WTC11 (cell line): ENCODE measurements at regions of chrX and their contacts with region 1.

Region 1: DNA sequence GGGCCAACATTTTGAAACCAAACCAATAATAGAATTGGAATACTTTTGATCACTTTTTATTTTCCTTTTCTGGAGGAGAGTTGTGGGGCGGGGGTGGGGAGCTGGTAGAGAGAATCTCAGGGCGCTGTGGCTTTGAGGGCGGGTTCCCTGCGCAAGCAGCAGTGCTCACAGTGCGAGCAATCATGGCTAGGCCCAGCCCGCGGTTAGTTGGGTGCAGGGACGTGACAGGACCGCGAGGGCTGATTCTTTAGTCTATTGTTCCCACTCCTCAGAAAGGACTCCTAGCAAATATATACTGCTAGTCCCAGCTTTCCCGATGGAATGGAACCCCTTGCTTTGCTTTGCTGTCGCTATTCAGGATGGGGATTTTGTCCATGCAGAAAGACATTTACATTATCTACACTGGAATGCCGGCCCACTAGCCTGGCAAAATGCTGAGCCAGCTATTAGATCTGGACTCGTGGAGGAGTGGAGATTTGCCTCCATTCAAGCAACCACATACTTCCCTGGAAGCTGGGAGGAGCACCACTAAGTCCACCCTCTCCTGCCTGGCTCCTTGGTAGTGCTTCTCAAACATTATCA is 23.9 kb upstream of the APLN start:
- DNase-seq: no peak
- ATAC-seq: no peak
- H3K4me3 Mint-ChIP-seq: peak overlapping the region; percentile 43
- H3K27ac Mint-ChIP-seq: no peak overlapping the region
- H3K4me1 Mint-ChIP-seq: peaks cover 14% of the 10 kb centered on the region
- H3K27me3 Mint-ChIP-seq: peaks cover 22% of the 10 kb centered on the region
- CTCF ChIP-seq: no peak

Region 2: DNA sequence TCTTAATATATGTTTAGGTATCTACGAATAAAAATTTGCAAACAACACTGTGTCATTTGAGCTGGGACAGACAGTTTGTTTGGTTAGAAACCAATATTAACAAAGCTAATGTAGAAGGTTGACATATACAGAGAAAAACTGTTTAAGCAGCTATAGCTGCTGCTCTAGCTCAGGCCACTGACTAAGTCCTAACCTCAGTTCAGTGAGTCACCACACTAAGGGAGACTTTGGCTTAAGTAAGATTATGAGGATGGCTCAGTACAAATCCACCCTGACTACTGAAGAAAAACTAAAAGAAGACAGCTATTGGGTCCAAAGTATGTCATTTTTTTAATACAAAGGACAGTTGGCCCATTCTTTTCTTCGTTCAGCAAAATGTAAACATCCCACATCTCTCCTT is 909.2 kb before region 1 on chrX:
- CTCF ChIA-PET with region 1: no interaction called
- POLR2A ChIA-PET with region 1: no interaction called
- DNase-seq: no peak
- ATAC-seq: no peak
- H3K4me3 Mint-ChIP-seq: no peak overlapping the region
- H3K27ac Mint-ChIP-seq: no peak overlapping the region
- H3K4me1 Mint-ChIP-seq: no peaks in the 10 kb centered on the region
- H3K27me3 Mint-ChIP-seq: peaks cover 3% of the 10 kb centered on the region
- CTCF ChIP-seq: no peak

Region 3: GRCh38 chrX:129663171-129663570 is 15.5 kb before region 1 on chrX:
- CTCF ChIA-PET with region 1: no interaction called
- POLR2A ChIA-PET with region 1: no interaction called
- DNase-seq: no peak
- ATAC-seq: peak; percentile 63
- H3K4me3 Mint-ChIP-seq: no peak overlapping the region
- H3K27ac Mint-ChIP-seq: no peak overlapping the region
- H3K4me1 Mint-ChIP-seq: peaks cover 28% of the 10 kb centered on the region
- H3K27me3 Mint-ChIP-seq: peaks cover 2% of the 10 kb centered on the region
- CTCF ChIP-seq: no peak

Region 4: DNA sequence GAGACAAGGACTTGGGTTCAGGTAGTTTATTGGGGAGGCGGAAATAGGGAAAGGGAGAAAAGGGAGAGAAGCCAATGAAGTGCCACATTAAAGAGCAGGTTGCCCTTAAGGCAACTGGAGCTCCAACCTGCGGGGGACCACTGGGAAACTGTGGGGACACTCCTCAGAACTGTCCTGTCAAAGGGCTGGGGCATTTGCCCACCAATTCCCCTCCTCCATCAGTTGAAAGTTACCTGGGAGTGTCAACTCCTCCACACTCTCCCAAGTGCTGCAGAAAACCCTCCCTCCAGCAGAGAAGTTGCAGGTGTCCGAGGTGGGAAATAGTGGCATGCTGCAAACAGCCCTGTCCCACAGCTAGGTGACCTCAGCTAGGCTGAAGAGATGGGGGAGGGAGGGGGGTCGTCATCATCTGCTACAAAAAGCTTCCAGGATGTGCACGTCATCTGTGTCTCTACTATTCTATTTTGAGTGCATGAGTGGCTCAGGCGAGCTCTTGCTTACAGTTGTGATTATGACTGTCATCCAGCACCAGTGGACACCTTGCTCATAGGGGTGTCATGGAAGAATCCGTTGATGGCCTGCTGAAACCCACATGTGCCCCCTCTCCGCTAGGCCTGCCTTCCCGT is 18.6 kb after region 1 on chrX:
- CTCF ChIA-PET with region 1: interaction called, 15 read pairs
- POLR2A ChIA-PET with region 1: no interaction called
- DNase-seq: no peak
- ATAC-seq: peak; percentile 16; the same call in 1 of the 2 replicates
- H3K4me3 Mint-ChIP-seq: peak overlapping the region; percentile 50
- H3K27ac Mint-ChIP-seq: peak overlapping the region; percentile 79
- H3K4me1 Mint-ChIP-seq: peaks cover 48% of the 10 kb centered on the region
- H3K27me3 Mint-ChIP-seq: peaks cover 4% of the 10 kb centered on the region
- CTCF ChIP-seq: no peak

Region 5: DNA sequence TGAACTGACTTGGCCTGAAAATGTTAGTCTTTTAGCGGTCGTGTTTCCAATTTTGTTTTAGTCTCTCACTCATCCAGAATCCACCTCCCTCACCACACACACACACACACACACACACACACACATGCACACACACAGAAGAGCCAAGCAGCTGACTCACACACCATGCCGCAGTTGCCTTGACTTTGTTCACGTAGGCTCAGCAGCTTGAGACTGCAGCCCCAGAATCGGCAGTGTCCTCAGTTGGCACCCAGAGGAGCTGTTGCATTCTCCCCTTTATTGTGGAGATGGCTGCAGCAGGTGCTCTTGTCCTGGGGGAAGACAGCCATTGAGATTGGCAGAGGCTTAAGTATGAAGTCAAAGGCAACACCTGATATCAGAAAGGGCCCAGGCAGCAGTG is 39.2 kb after region 1 on chrX:
- CTCF ChIA-PET with region 1: interaction called, 10 read pairs
- POLR2A ChIA-PET with region 1: no interaction called
- DNase-seq: no peak
- ATAC-seq: peak; percentile 75
- H3K4me3 Mint-ChIP-seq: no peak overlapping the region
- H3K27ac Mint-ChIP-seq: no peak overlapping the region; the same call in 1 of the 2 replicates
- H3K4me1 Mint-ChIP-seq: peaks cover 45% of the 10 kb centered on the region
- H3K27me3 Mint-ChIP-seq: no peaks in the 10 kb centered on the region; the same call in none of the 2 replicates
- CTCF ChIP-seq: no peak

Region 6: DNA sequence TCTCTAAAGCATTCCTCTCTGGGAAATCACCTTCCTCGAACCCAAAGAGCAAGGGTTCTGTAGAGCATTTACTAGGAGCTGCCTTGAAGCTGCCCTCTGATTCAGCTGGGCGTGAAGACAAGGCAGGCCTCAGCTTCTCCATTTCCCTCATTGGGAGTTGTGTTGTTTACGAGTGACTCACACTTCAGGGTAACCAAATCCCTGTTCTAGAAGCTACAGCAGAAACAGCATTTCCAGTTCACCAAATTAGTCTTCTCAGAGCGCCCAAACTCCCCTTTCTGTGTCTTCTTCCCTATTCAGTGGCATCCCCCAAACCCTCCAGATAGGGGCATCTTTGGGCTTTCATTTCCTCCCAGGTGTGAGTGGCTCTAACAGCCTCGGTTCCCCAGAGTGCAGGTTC is 59.2 kb after region 1 on chrX:
- CTCF ChIA-PET with region 1: no interaction called
- POLR2A ChIA-PET with region 1: no interaction called
- DNase-seq: no peak
- ATAC-seq: no peak
- H3K4me3 Mint-ChIP-seq: no peak overlapping the region
- H3K27ac Mint-ChIP-seq: no peak overlapping the region
- H3K4me1 Mint-ChIP-seq: peaks cover 27% of the 10 kb centered on the region
- H3K27me3 Mint-ChIP-seq: peaks cover 10% of the 10 kb centered on the region
- CTCF ChIP-seq: no peak